ENCODE measurements at regions of chr19 and their contacts with region 1.

Region 1: DNA sequence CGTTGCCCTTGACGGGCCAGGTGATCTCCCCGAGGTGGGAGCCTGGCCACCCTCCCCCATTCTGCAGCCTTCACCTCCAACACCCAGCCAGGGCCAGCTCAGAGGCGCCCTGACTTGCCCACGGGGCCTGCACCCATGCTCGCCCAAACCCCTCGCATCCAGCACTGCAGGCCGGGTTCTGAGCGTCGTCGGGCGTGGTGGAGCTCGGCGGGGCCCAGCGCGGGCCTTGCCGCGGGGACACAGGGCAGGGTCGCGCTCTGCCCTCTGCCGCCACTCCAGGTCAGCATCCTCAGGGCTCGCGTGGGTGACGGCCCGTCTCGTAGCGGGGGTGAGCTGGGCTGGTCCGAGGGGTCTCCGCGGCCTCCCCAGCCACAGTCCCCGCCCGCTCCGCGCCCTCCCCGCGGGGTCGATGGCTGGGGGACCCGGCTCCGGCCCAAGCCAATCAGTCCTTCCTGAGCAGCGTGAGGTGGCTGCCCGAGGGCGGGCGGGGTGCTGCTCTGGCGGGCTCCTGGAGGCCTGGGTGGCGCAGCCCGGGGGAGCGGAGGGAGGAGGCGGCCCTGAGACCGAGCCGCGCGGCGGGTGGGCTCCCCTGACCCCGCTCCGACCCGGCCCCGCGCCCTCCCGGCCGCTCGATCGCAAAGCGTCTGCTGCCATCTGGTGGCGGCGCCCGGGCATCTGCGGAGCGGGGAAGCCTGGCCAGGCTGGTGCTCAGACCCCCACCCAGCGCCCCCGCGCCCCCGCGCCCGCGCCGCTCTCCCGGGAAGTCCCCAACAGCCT is 61.4 kb downstream of the CCNE1 start:
- DNase-seq: peak; percentile 46 to 84 (median 83)
- ATAC-seq: peak; percentile 76 to 88
- H3K4me3 ChIP-seq: peak overlapping the region; percentile 11
- H3K27ac ChIP-seq: no peak overlapping the region
- H3K4me1 ChIP-seq: no peaks in the 10 kb centered on the region
- H3K27me3 ChIP-seq: no peaks in the 10 kb centered on the region

Region 2: DNA sequence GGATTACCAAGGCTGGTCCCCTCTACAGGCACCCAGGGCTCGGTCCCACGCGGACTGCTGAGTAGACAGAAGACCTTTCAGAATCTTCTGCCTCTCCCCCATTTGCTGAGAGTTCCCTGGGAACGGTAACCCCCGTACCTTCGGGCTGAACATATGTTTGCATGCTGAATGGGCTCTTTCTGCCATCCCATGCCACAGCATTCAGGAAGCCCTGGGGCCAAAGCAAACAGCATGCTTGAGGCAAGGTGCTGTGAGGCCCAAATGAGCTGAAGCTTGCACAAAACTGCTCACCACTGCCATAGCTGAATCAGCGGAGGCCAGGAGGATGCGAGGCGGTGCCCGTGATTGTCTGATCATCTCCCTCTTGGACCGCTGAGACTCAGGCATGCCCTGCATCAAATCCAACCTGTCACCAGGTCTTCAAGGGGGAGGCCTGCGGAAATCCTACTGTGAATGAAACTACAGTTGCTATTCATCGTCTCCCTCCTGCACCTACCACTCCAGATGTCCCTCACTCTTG is 141.8 kb before region 1 on chr19:
- intact Hi-C with region 1: loop called in 1 of 4 experiments (anchors 2 kb)
- DNase-seq: no peak
- ATAC-seq: no peak
- H3K4me3 ChIP-seq: no peak overlapping the region
- H3K27ac ChIP-seq: no peak overlapping the region
- H3K4me1 ChIP-seq: no peaks in the 10 kb centered on the region
- H3K27me3 ChIP-seq: no peaks in the 10 kb centered on the region

Region 3: GRCh38 chr19:29771708-29772414 is 101.4 kb before region 1 on chr19:
- intact Hi-C with region 1: loop called (anchors 2 to 10 kb)
- DNase-seq: peak; percentile 51 to 78 (median 67)
- ATAC-seq: peak; percentile 76
- H3K4me3 ChIP-seq: no peak overlapping the region
- H3K27ac ChIP-seq: no peak overlapping the region
- H3K4me1 ChIP-seq: no peaks in the 10 kb centered on the region
- H3K27me3 ChIP-seq: no peaks in the 10 kb centered on the region

Region 4: DNA sequence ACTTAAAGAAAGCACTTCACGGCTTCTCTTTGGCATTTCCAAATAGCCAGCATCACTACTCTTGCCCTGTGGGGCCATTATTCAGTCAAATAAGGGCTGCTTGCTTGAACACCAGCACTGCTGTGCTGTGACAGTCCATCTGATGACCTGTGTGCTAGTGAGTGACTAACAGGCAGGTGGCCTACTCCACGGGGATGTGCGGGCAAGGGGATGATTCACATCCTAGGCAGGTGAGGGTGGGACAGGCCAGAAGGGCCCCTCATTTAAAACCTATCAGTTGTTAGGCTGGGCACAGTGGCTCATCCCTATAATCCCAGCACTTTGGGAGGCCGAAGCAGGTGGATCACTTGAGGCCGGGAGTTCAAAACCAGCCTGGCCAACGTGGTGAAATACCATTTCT is 53.2 kb before region 1 on chr19:
- intact Hi-C with region 1: no loop called
- DNase-seq: no peak
- ATAC-seq: no peak
- H3K4me3 ChIP-seq: no peak overlapping the region
- H3K27ac ChIP-seq: no peak overlapping the region
- H3K4me1 ChIP-seq: no peaks in the 10 kb centered on the region
- H3K27me3 ChIP-seq: no peaks in the 10 kb centered on the region